ENCODE measurements at regions of chr20 and their contacts with region 1.

Region 1: GRCh38 chr20:354298-355064 is 7.6 kb downstream of the NRSN2 start:
- DNase-seq: peak; percentile 90

Region 2: DNA sequence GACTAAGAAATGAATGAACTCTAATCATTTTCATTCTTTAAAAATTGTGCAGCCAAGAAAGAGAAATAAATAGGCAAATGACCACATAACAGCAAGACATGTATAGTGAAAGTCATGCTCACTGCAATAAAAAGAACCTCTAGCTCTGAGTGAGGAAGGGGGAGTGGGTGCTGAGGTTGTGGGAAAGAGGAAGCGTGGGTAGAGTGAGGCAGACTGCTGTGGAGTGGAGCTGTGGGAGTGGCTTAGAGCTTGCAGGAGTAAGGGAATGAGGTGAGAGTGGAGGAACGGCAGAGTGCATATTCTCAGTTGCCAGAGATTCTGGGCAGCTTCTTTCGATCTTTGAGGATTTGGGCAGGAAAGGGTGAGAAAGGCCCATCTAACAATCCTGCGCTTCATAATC is 117.0 kb before region 1 on chr20:
- intact Hi-C with region 1: no loop called
- DNase-seq: no peak

Region 3: DNA sequence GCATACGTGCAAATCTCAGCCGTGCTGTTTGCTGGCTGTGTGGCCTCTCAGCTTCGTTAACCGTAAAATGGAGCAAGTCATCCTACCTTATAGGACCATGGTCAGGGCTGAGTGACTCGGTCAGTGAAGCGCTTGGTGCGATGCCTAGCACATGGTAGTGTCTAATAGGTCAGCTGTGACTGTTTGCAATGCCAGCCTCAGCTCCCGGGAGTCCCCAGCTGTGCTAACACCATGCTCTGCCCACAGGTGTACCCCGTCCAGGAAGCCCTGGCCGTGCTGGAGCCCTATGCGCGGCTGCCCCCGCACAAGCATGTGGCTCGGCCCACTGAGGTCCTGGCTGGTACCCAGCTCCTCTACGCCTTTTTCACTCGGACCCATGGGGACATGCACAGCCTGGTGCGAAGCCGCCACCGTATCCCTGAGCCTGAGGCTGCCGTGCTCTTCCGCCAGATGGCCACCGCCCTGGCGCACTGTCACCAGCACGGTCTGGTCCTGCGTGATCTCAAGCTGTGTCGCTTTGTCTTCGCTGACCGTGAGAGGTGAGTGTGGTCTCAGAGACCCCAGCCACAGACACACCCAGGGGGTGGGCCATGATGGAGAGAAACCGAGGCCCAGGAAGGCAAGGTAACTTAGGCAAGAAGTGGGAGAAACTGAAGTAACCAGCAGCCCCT is 36.7 kb after region 1 on chr20:
- intact Hi-C with region 1: no loop called
- DNase-seq: no peak

Region 4: DNA sequence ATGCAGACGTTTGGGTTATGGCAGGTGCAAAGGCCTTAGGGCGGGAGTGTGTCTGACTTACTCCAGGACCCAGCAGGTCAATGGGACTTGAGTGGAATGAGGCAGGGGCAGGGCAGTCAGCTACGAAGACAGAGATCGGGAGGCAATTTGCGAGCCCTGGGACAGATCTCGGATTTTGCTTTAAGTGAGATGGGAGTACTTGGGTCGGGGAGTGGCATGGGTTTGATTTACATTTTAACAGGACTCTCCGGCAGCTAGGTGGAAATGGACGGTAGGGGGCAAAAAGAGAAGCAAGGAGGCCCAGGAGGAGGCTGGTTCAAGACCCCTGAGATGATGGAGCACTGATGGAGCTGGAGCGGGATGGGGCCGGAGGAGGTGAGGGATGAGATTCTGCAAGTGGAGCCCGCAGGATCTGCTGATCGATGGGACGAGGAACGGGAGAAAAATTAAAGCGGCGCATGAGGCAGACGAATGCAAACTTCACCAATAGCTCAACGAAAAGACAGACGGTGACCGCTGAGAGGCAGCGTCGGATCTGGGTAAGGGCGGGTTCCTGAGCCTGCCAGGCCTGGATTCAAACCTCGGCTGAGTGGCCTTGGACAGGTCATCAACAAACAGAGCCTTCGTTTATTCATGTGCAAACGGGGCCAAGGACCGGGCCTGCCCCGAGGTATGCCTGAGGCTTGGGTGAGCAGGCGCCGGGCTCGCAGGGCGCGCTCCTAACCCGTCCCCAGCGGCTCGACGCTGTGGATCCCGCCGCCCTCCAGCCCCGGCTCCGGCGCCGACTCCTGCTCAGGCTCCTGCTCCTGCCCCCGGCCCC is 52.9 kb after region 1 on chr20:
- intact Hi-C with region 1: loop called in 1 of 2 experiments (anchors 10 kb)
- DNase-seq: peak; percentile 89

Region 5: DNA sequence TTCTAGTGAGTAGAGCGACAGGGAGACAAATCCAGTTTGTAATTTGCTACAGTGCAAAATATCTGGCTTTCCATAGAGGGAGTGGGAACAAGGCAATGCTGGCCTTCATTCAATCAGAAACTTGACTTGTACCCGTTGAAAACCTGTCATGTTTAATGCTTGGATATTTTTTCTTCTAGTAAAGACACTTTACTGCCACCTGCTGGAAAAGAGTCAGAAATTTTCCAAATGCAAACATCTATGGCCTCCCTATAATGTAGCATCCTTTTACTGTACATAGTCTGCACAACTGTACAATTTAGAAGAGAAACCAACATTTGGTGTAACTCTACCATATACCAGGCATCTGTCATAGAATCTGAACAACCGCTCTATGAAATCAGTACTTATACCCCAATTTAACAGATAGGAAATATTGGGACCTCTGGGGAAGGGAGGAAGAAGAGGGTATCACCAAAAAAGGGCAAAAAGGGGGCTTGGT is 124.5 kb after region 1 on chr20:
- intact Hi-C with region 1: loop called (anchors 5 kb)
- DNase-seq: no peak